Tibial artery (tissue), 4 donors: ENCODE measurements at regions of chr12 and their contacts with region 1.

Region 1: DNA sequence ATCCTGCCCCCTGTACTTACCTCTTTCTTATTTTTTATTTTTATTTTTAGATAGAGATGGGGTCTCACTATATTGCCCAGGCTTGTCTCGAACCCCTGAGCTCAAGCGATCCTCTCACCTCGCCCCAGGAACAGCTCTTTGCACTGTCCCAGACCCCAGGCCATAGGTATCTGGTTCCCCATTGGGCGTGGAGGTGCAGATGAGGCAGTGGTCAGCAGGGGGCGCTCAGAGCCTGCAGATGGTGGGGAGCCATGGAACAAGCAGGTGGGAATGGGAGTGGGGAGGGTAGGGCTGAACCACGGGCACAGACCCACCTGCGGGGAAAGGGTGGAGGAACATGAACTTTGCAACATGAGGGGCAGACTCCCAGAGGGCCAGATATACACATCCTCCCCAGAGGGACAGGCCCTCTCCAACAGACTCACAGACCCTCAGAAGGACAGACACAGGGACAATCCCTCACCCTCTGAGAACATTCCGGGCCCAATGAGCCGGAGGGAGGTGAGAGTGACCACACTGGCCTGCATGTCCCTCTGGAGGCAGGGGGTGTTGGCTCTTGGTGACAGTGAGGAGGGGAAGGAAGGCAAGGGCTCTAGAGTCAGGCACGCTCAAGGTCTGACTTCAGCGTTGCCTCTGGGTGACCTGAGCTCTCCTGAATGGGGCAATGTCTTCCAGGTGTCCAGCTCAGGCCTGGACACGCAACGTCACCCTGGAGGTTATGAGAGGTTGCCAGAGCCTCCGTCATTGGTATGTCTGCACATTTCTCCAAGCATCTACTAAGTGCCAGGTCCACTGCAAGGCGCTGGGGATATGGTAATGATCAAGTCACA is 34.9 kb downstream of the KRT80 start:
- DNase-seq: peak; percentile 79 to 84
- H3K4me3 ChIP-seq: no peak overlapping the region
- H3K27ac ChIP-seq: no peak overlapping the region
- H3K4me1 ChIP-seq: peaks cover 0 to 9% (median 8%) of the 10 kb centered on the region in 4 donors
- H3K27me3 ChIP-seq: peaks cover 0 to 3% of the 10 kb centered on the region in 2 donors
- CTCF ChIP-seq: peak; percentile 93 to 96

Region 2: DNA sequence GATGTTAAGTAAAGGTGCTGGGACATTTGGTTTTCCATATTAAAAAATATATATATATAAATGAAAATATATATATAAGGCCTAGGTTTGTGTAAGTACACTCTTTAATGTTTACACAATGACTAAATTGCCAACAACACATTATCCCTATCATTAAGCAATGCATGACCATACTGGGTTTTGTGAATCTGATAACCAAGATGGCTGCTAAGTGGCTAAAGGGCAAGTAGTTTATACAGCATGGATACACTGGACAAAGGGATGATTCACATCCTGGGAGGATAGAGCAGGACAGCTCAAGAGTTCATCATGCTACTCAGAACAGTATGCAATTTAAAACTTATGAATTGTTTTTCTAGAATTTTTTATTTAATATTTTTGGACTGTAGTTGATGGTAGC is 397.8 kb before region 1 on chr12:
- intact Hi-C with region 1: no loop called
- DNase-seq: no peak
- H3K4me3 ChIP-seq: no peak overlapping the region
- H3K27ac ChIP-seq: no peak overlapping the region
- H3K4me1 ChIP-seq: no peaks in the 10 kb centered on the region
- H3K27me3 ChIP-seq: peaks cover 0 to 5% of the 10 kb centered on the region in 2 donors
- CTCF ChIP-seq: no peak

Region 3: DNA sequence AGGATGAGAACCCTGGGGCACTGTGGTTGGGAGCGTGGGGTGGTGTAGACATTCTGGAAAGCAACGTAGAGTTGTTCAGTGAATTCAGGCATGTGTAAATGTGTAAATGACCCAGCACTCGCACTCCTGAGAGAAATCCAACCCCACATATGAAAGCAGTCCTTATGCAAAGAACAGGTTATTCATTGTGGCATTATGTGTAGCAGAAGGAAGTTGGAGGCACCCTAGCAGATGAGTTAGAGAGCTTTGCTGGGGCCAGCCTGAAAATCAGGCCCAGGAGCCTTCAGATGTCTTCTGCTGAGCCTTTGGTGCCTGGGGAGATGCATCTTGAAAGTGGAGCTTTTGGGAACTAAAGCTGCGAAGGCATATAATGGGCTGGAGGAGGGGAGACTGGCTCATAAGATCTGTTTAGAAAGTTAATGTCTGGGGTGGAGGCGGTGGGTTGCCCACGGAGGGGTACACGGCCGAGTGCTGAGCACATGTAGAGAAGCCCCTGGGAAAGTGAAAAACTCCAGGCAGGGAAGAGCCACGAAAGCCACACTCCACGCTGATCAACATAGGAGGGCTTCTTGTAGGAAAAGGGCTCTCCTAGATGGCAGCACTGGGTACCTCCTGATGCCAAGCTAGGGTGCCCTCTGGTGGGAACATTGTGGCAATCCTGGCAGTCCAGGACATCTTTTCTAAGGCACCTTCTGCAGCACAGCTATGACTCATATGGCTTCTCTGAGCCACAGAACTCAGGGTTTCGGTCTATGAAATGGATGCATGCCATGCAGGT is 170.3 kb after region 1 on chr12:
- intact Hi-C with region 1: loop called (anchors 2 kb)
- DNase-seq: peak; percentile 77 to 91
- H3K4me3 ChIP-seq: no peak overlapping the region
- H3K27ac ChIP-seq: no peak overlapping the region
- H3K4me1 ChIP-seq: peaks cover 0 to 18% (median 5%) of the 10 kb centered on the region in 4 donors
- H3K27me3 ChIP-seq: no peaks in the 10 kb centered on the region
- CTCF ChIP-seq: peak; percentile 84 to 88